HEK293 (cell line): ENCODE measurements at regions of chr9 and their contacts with region 1.

Region 1: GRCh38 chr9:110058304-110058953 is 149.5 kb downstream of the C9orf152 start:
- H3K4me3 ChIP-seq: no peak overlapping the region
- H3K27ac ChIP-seq: no peak overlapping the region
- H3K4me1 ChIP-seq: no peaks in the 10 kb centered on the region
- CTCF ChIP-seq: peak; percentile 40; the same call in 1 of the 2 replicates

Region 2: GRCh38 chr9:110143950-110144545 is 85.6 kb after region 1 on chr9:
- CTCF ChIA-PET with region 1: interaction called, 10 read pairs
- POLR2A ChIA-PET with region 1: no interaction called
- H3K4me3 ChIP-seq: no peak overlapping the region
- H3K27ac ChIP-seq: no peak overlapping the region
- H3K4me1 ChIP-seq: no peaks in the 10 kb centered on the region
- CTCF ChIP-seq: no peak